K562 (cell line): ENCODE measurements at regions of chr1 and their contacts with region 1.

Region 1: GRCh38 chr1:224113918-224114786 is at the start of gene FBXO28:
- DNase-seq: peak; percentile 97 to 99 (median 98)
- ATAC-seq: peak; percentile 98
- H3K4me3 ChIP-seq: peak within 1 kb of the TSS; percentile 94
- H3K27ac ChIP-seq: peak within 1 kb of the TSS; percentile 84
- H3K4me1 ChIP-seq: peaks cover 5 to 11% of the 10 kb centered on the region in 2 experiments; a peak in 3 of 5 replicates
- H3K27me3 ChIP-seq: no peaks in the 10 kb centered on the region
- CTCF ChIP-seq: no peak
- EP300 ChIP-seq: no peak
- POLR2A ChIP-seq: peak; percentile 98
- RAD21 ChIP-seq: no peak
- polyA plus RNA-seq, gene FBXO28: 4.1 to 5.8 TPM

Region 2: DNA sequence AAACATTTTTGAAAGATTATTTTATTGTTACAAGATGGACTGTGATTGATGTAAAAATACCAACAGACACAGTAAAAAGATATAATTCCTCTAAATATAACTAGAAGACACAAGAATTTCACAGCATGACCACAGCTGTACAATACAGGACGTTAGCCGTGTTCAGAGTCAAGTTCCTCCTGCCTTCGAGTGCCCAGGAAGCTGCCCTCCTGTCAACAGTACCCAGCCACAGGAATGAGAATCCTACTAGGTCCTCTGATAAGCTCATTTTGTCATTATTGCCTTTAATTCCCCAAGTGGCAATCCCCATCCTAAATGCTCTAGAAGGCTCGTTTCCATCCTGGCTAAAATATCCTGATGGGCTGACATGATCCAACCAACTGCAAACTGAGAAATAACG is 418.2 kb before region 1 on chr1:
- CTCF ChIA-PET with region 1: no interaction called
- POLR2A ChIA-PET with region 1: no interaction called
- in situ Hi-C with region 1: no loop called
- intact Hi-C with region 1: loop called (anchors 5 kb)
- DNase-seq: no peak
- ATAC-seq: no peak
- H3K4me3 ChIP-seq: no peak overlapping the region
- H3K27ac ChIP-seq: no peak overlapping the region
- H3K4me1 ChIP-seq: peaks cover 10 to 15% of the 10 kb centered on the region in 2 experiments
- H3K27me3 ChIP-seq: no peaks in the 10 kb centered on the region
- CTCF ChIP-seq: no peak
- EP300 ChIP-seq: no peak
- POLR2A ChIP-seq: no peak
- RAD21 ChIP-seq: no peak

Region 3: DNA sequence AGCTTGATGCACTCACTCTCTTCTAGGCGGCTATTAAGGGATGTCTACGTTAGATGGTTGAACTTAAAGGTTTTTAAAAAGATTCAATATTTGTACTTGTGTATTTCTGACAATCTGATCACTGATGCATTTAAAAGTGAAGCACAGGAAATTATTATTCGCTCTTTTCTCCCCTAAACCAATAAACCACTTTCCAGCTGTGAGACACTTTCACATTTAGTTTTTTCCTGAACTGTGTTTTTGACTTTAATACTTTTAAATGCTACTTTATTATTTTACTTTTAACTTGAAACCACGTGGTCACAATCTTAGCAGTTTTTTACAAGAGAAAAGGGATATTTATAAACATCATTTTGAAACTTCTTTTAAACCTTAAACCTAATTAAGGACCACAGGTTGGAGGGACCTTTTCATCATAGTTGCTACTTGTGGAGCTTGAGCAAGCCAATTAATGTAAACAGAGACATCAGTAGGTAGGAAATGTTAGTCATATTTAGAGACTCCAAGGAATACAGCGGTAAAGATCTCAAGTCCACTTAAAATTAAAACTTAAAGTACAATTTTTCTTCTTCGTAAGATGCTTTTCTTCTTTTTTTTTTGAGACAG is 311.2 kb after region 1 on chr1:
- CTCF ChIA-PET with region 1: no interaction called
- POLR2A ChIA-PET with region 1: no interaction called
- in situ Hi-C with region 1: no loop called
- intact Hi-C with region 1: no loop called
- DNase-seq: no peak
- ATAC-seq: no peak
- H3K4me3 ChIP-seq: no peak overlapping the region
- H3K27ac ChIP-seq: no peak overlapping the region
- H3K4me1 ChIP-seq: peaks cover 0 to 8% of the 10 kb centered on the region in 2 experiments; a peak in 4 of 5 replicates
- H3K27me3 ChIP-seq: no peaks in the 10 kb centered on the region
- CTCF ChIP-seq: no peak
- EP300 ChIP-seq: no peak
- POLR2A ChIP-seq: no peak
- RAD21 ChIP-seq: no peak

Region 4: GRCh38 chr1:224454397-224455066 is 340.4 kb after region 1 on chr1:
- CTCF ChIA-PET with region 1: interaction called, 19 read pairs
- POLR2A ChIA-PET with region 1: interaction called, 4 read pairs
- in situ Hi-C with region 1: loop called (anchors 10 kb)
- intact Hi-C with region 1: loop called (anchors 1 kb)
- DNase-seq: peak in 1 of 4 experiments; percentile 2
- ATAC-seq: no peak
- H3K4me3 ChIP-seq: no peak overlapping the region
- H3K27ac ChIP-seq: no peak overlapping the region
- H3K4me1 ChIP-seq: peaks cover 12 to 20% of the 10 kb centered on the region in 2 experiments
- H3K27me3 ChIP-seq: no peaks in the 10 kb centered on the region; a peak in 1 of 5 replicates
- CTCF ChIP-seq: no peak
- EP300 ChIP-seq: no peak
- POLR2A ChIP-seq: no peak
- RAD21 ChIP-seq: no peak

Region 5: GRCh38 chr1:224503161-224504118 is 389.3 kb after region 1 on chr1:
- CTCF ChIA-PET with region 1: no interaction called
- POLR2A ChIA-PET with region 1: no interaction called
- in situ Hi-C with region 1: no loop called
- intact Hi-C with region 1: loop called (anchors 5 kb)
- DNase-seq: peak; percentile 99 to 100 (median 100)
- ATAC-seq: peak; percentile 97
- H3K4me3 ChIP-seq: peak overlapping the region; percentile 18; the same call in 1 of the 2 replicates
- H3K27ac ChIP-seq: peak overlapping the region; percentile 60
- H3K4me1 ChIP-seq: peaks cover 44 to 45% of the 10 kb centered on the region in 2 experiments
- H3K27me3 ChIP-seq: no peaks in the 10 kb centered on the region
- CTCF ChIP-seq: peak; percentile 66 to 73 (median 68)
- EP300 ChIP-seq: peak; percentile 96
- POLR2A ChIP-seq: 0 out of 2 replicates have a peak, but pooled peaks have one; percentile 35
- RAD21 ChIP-seq: peak; percentile 51 to 72

Region 6: GRCh38 chr1:224644553-224645154 is 530.5 kb after region 1 on chr1:
- CTCF ChIA-PET with region 1: no interaction called
- POLR2A ChIA-PET with region 1: no interaction called
- in situ Hi-C with region 1: no loop called
- intact Hi-C with region 1: loop called (anchors 10 kb)
- DNase-seq: peak; percentile 67 to 77 (median 74)
- ATAC-seq: peak; percentile 86
- H3K4me3 ChIP-seq: no peak overlapping the region
- H3K27ac ChIP-seq: no peak overlapping the region
- H3K4me1 ChIP-seq: no peaks in the 10 kb centered on the region
- H3K27me3 ChIP-seq: peaks cover 36 to 72% of the 10 kb centered on the region in 2 experiments
- CTCF ChIP-seq: peak; percentile 84 to 92 (median 90)
- EP300 ChIP-seq: no peak
- POLR2A ChIP-seq: no peak
- RAD21 ChIP-seq: peak; percentile 59 to 80

Region 7: DNA sequence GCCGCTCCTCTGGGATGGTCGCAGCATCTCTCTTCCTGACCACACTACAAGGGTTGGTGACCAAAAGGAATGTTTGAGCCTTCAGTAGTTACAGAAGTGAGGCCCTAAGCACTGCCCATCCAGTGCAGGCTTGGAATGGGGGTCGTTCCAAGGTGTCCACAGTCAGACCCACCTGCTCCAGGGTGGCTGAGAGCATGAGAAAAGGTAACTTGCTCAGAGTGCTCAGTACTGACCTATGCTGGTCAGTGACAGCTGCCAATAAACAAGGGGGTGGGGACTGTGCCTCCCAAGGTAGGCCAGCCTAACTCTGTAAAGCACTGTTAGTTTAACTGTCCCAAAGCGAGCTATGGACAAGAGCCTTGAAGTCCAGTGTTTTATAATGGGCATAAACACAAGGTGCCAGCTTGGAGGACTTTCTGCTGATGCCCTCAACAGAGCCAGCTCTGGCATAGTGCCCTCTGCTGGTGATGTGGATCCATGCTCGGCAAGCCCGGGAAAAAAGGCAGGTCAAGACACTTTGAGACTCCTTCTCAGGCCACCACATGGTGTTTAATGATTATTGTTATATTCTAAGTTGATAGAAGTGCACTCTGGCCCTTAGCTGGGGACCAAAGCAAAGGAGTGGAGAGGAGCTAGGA is 737.2 kb after region 1 on chr1:
- CTCF ChIA-PET with region 1: no interaction called
- POLR2A ChIA-PET with region 1: no interaction called
- in situ Hi-C with region 1: no loop called
- intact Hi-C with region 1: loop called (anchors 5 kb)
- DNase-seq: peak; percentile 46 to 60 (median 54)
- ATAC-seq: peak; percentile 89
- H3K4me3 ChIP-seq: no peak overlapping the region
- H3K27ac ChIP-seq: no peak overlapping the region
- H3K4me1 ChIP-seq: no peaks in the 10 kb centered on the region
- H3K27me3 ChIP-seq: peaks cover 0 to 7% of the 10 kb centered on the region in 2 experiments; a peak in 1 of 5 replicates
- CTCF ChIP-seq: peak; percentile 73 to 90 (median 76)
- EP300 ChIP-seq: no peak
- POLR2A ChIP-seq: no peak
- RAD21 ChIP-seq: peak; percentile 60 to 67; a peak in 3 of 4 replicates

Region 8: GRCh38 chr1:224929335-224930237 is 815.4 kb after region 1 on chr1 and contains the start of gene DNAH14:
- CTCF ChIA-PET with region 1: no interaction called
- POLR2A ChIA-PET with region 1: no interaction called
- in situ Hi-C with region 1: loop called (anchors 25 kb)
- intact Hi-C with region 1: no loop called
- DNase-seq: peak; percentile 90 to 96 (median 92)
- ATAC-seq: peak; percentile 99
- H3K4me3 ChIP-seq: peak within 1 kb of the TSS; percentile 62
- H3K27ac ChIP-seq: peak within 1 kb of the TSS; percentile 88
- H3K4me1 ChIP-seq: peaks cover 0 to 9% of the 10 kb centered on the region in 2 experiments; a peak in 3 of 5 replicates
- H3K27me3 ChIP-seq: no peaks in the 10 kb centered on the region
- CTCF ChIP-seq: no peak
- EP300 ChIP-seq: peak; percentile 31
- POLR2A ChIP-seq: peak; percentile 93
- RAD21 ChIP-seq: 0 out of 4 replicates have a peak, but pooled peaks of 1 of the 2 experiments have one; percentile 6
- polyA plus RNA-seq, gene DNAH14: 58.4 to 64.5 TPM